Activated CD4-positive, alpha-beta T cell treated with anti-CD3 and anti-CD28 coated beads for 36 hours (primary cell): ENCODE measurements at regions of chr1 and their contacts with region 1.

Region 1: DNA sequence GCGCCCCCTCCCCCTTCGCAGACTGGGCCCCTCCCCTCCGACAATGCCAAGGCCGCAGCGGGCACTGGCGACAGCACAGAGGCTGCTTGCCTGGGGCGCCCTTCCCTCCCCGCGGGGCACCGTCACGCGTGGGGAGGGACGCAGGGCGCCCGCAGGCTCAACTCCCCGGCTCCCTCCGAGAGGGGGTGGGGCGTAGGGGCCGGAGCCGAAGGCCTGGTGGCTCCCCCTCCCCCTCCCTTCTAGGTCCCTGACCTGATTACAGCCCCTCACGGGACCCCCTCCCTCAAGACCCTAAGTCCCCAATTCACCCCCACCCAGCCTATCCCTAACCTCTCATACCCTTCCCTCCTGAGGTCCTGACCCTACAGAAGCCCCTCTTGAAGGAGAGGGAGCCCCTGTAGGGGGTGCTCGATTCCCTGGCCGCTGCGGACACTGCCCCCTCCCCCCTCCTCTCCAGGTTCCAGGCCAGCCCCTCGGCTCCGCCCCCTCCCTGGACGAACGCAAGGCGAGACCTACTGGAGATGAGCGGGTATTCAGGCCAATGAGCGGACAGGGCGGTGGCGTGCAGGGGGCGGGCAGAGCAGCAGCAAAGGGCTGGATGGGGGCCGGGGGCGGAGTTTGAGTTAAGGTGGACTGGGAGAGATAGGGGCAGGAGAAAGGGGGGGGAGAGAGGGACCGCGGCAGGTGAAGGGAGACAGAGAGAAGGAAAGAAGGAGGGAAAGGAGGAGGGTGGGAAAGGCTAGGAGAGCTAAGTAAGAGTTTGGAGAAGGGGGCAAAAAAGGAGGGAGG is 733 bp upstream of the ZBTB7B start:
- DNase-seq: peak; percentile 100
- ATAC-seq: peak; percentile 67
- H3K4me3 Mint-ChIP-seq: peak overlapping the region; percentile 96
- H3K27ac Mint-ChIP-seq: peak overlapping the region; percentile 94
- H3K4me1 Mint-ChIP-seq: peaks cover 54% of the 10 kb centered on the region
- H3K27me3 Mint-ChIP-seq: no peaks in the 10 kb centered on the region

Region 2: GRCh38 chr1:153842006-153842471 is 1159.8 kb before region 1 on chr1:
- CTCF ChIA-PET with region 1: no interaction called
- POLR2A ChIA-PET with region 1: no interaction called
- intact Hi-C with region 1: no loop called
- DNase-seq: no peak
- ATAC-seq: peak; percentile 49
- H3K4me3 Mint-ChIP-seq: no peak overlapping the region
- H3K27ac Mint-ChIP-seq: peak overlapping the region; percentile 56
- H3K4me1 Mint-ChIP-seq: peaks cover 25% of the 10 kb centered on the region
- H3K27me3 Mint-ChIP-seq: no peaks in the 10 kb centered on the region

Region 3: GRCh38 chr1:154607609-154608396 is 394.1 kb before region 1 on chr1 and contains the start of gene ADAR:
- CTCF ChIA-PET with region 1: no interaction called
- POLR2A ChIA-PET with region 1: no interaction called
- intact Hi-C with region 1: loop called in 1 of 2 experiments (anchors 2 kb)
- DNase-seq: peak; percentile 95
- ATAC-seq: peak; percentile 69
- H3K4me3 Mint-ChIP-seq: peak within 1 kb of the TSS; percentile 95
- H3K27ac Mint-ChIP-seq: peak within 1 kb of the TSS; percentile 99
- H3K4me1 Mint-ChIP-seq: peaks cover 75% of the 10 kb centered on the region
- H3K27me3 Mint-ChIP-seq: no peaks in the 10 kb centered on the region
- total RNA-seq, gene ADAR: 310 to 332 TPM

Region 4: DNA sequence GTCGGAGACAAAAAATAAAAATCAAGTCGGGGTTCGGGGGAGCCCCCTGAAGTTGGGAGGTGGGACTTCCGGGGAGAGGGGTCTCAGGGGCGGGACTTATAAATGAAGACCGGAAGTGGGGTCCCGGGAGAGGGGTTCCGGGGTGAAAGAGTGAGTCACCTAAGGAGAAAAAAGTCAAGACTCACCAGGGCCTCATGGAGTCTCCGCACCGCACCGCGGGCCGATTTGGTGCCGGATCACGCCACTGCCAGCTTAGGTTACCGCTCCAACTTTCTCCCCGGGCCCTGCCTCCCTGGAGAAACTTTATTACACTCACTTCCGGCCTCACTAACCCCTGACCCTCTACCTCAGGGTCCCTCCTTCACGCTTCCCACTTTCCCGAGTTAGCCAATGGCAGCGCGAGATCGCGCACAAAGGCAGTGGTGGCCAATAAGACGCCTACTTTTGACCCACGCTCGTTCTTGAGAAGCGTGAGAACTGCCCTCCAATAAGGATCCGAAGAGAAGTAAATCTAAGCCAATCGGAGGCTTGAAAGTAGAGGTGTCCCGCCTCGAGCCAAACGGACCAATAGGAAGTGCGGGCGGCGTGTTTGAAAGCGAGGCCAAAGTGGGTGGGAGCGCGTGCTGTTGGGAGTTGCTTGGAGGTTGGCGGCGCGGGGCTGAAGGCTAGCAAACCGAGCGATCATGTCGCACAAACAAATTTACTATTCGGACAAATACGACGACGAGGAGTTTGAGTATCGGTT is 27.6 kb before region 1 on chr1 and contains the start of gene CKS1B:
- CTCF ChIA-PET with region 1: interaction called, 15 read pairs
- POLR2A ChIA-PET with region 1: interaction called, 7 read pairs
- intact Hi-C with region 1: loop called (anchors 1 kb)
- DNase-seq: peak; percentile 98
- ATAC-seq: peak; percentile 86
- H3K4me3 Mint-ChIP-seq: no peak within 1 kb of the TSS
- H3K27ac Mint-ChIP-seq: no peak within 1 kb of the TSS
- H3K4me1 Mint-ChIP-seq: peaks cover 30% of the 10 kb centered on the region
- H3K27me3 Mint-ChIP-seq: no peaks in the 10 kb centered on the region
- total RNA-seq, gene CKS1B: 190 to 196 TPM

Region 5: GRCh38 chr1:155063550-155064110 is 61.8 kb after region 1 on chr1 and contains the start of gene EFNA4:
- CTCF ChIA-PET with region 1: interaction called, 4 read pairs
- POLR2A ChIA-PET with region 1: no interaction called
- intact Hi-C with region 1: loop called in 1 of 2 experiments (anchors 1 kb)
- DNase-seq: peak; percentile 92
- ATAC-seq: peak; percentile 87
- H3K4me3 Mint-ChIP-seq: peak within 1 kb of the TSS; percentile 83
- H3K27ac Mint-ChIP-seq: peak within 1 kb of the TSS; percentile 72
- H3K4me1 Mint-ChIP-seq: peaks cover 31% of the 10 kb centered on the region
- H3K27me3 Mint-ChIP-seq: no peaks in the 10 kb centered on the region
- total RNA-seq, gene EFNA4: 6.3 to 6.5 TPM

Region 6: GRCh38 chr1:155105604-155106022 is 103.7 kb after region 1 on chr1:
- CTCF ChIA-PET with region 1: no interaction called
- POLR2A ChIA-PET with region 1: no interaction called
- intact Hi-C with region 1: no loop called
- DNase-seq: no peak
- ATAC-seq: no peak
- H3K4me3 Mint-ChIP-seq: no peak overlapping the region
- H3K27ac Mint-ChIP-seq: no peak overlapping the region
- H3K4me1 Mint-ChIP-seq: no peaks in the 10 kb centered on the region
- H3K27me3 Mint-ChIP-seq: no peaks in the 10 kb centered on the region

Region 7: GRCh38 chr1:155193275-155193990 is 191.6 kb after region 1 on chr1:
- CTCF ChIA-PET with region 1: interaction called, 3 read pairs
- POLR2A ChIA-PET with region 1: no interaction called
- intact Hi-C with region 1: loop called in 1 of 2 experiments (anchors 1 kb)
- DNase-seq: peak; percentile 89
- ATAC-seq: peak; percentile 62
- H3K4me3 Mint-ChIP-seq: peak overlapping the region; percentile 94
- H3K27ac Mint-ChIP-seq: peak overlapping the region; percentile 96
- H3K4me1 Mint-ChIP-seq: peaks cover 31% of the 10 kb centered on the region
- H3K27me3 Mint-ChIP-seq: no peaks in the 10 kb centered on the region

Region 8: GRCh38 chr1:155227261-155228095 is 225.6 kb after region 1 on chr1:
- CTCF ChIA-PET with region 1: no interaction called
- POLR2A ChIA-PET with region 1: no interaction called
- intact Hi-C with region 1: no loop called
- DNase-seq: peak; percentile 99
- ATAC-seq: peak; percentile 98
- H3K4me3 Mint-ChIP-seq: peak overlapping the region; percentile 96
- H3K27ac Mint-ChIP-seq: peak overlapping the region; percentile 97
- H3K4me1 Mint-ChIP-seq: peaks cover 27% of the 10 kb centered on the region
- H3K27me3 Mint-ChIP-seq: no peaks in the 10 kb centered on the region

Region 9: GRCh38 chr1:156500797-156501499 is 1499.1 kb after region 1 on chr1:
- CTCF ChIA-PET with region 1: no interaction called
- POLR2A ChIA-PET with region 1: no interaction called
- intact Hi-C with region 1: loop called in 1 of 2 experiments (anchors 10 kb)
- DNase-seq: peak; percentile 96
- ATAC-seq: peak; percentile 65
- H3K4me3 Mint-ChIP-seq: peak overlapping the region; percentile 88
- H3K27ac Mint-ChIP-seq: peak overlapping the region; percentile 99
- H3K4me1 Mint-ChIP-seq: peaks cover 73% of the 10 kb centered on the region
- H3K27me3 Mint-ChIP-seq: no peaks in the 10 kb centered on the region